A673 (cell line): ENCODE measurements at regions of chr3 and their contacts with region 1.

Region 1: DNA sequence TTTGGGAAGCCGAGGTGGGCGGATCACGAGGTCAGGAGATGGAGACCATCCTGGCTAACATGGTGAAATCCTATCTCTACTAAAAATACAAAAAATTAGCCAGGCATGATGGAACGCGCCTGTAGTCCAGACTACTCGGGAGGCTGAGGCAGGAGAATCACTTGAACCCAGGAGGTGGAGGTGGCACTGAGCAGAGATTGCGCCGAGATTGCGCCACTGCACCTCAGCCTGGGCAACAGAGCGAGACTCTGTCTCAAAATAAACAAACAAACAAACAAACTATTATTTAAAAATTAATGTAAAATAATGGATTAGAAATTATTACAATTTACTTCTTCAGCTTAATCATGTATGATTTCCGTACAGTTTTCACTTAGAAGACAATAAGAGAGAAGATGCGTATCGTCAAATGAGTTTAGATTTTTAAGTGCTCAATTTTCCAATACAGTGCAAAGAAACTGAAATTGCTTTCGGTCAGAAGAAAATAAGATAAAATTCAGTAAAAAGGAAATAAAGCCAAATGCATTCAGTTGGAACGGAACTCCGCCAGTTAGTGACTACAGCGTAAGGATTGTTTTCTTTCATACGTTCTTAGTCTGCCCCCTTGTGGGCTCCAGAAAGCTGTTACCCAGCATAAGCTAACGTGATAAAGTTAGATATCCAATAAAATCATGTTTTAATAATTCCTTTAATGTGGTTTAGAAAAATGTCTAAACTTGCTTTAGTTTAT is 24.8 kb downstream of the AADAC start:
- DNase-seq: peak; percentile 93
- H3K4me3 ChIP-seq: peak overlapping the region; percentile 36
- H3K27ac ChIP-seq: peak overlapping the region; percentile 47
- H3K4me1 ChIP-seq: peaks cover 36% of the 10 kb centered on the region
- H3K27me3 ChIP-seq: no peaks in the 10 kb centered on the region
- CTCF ChIP-seq: peak; percentile 92

Region 2: GRCh38 chr3:151168269-151169094 is 670.3 kb before region 1 on chr3:
- CTCF ChIA-PET with region 1: no interaction called
- POLR2A ChIA-PET with region 1: no interaction called
- intact Hi-C with region 1: loop called (anchors 5 kb)
- DNase-seq: peak; percentile 72
- H3K4me3 ChIP-seq: no peak overlapping the region
- H3K27ac ChIP-seq: no peak overlapping the region
- H3K4me1 ChIP-seq: no peaks in the 10 kb centered on the region
- H3K27me3 ChIP-seq: no peaks in the 10 kb centered on the region
- CTCF ChIP-seq: peak; percentile 90

Region 3: GRCh38 chr3:151290673-151291072 is 548.1 kb before region 1 on chr3:
- CTCF ChIA-PET with region 1: no interaction called
- POLR2A ChIA-PET with region 1: no interaction called
- intact Hi-C with region 1: loop called (anchors 1 kb)
- DNase-seq: peak; percentile 69
- H3K4me3 ChIP-seq: no peak overlapping the region
- H3K27ac ChIP-seq: no peak overlapping the region
- H3K4me1 ChIP-seq: no peaks in the 10 kb centered on the region
- H3K27me3 ChIP-seq: no peaks in the 10 kb centered on the region
- CTCF ChIP-seq: peak; percentile 69

Region 4: DNA sequence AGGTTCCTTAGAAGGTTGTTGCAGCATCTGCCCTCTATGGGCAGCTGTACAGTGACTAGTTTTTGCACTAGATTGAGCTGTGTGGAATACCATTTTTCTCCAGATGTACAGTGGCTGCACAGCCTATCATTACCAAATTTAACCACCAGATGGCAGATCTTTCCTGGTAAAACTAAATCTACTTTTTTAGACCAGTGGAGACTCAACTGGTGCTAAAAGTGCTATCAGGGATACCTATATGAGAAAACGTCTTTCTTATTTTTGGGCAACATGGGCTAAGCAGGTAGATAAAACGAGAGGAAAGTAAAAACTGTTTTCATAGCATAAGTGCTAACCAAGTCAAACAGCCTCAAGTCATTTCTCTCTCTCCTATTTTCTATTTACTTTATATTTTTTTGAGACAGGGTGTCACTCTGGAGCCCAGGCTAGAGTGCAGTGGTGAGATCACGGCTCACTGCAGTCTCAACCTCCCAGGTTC is 399.1 kb before region 1 on chr3:
- CTCF ChIA-PET with region 1: interaction called, 19 read pairs
- POLR2A ChIA-PET with region 1: no interaction called
- intact Hi-C with region 1: loop called (anchors 1 kb)
- DNase-seq: peak; percentile 90
- H3K4me3 ChIP-seq: no peak overlapping the region
- H3K27ac ChIP-seq: peak overlapping the region; percentile 34
- H3K4me1 ChIP-seq: peaks cover 22% of the 10 kb centered on the region
- H3K27me3 ChIP-seq: no peaks in the 10 kb centered on the region
- CTCF ChIP-seq: peak; percentile 77

Region 5: GRCh38 chr3:151560738-151561137 is 278.0 kb before region 1 on chr3:
- CTCF ChIA-PET with region 1: no interaction called
- POLR2A ChIA-PET with region 1: no interaction called
- intact Hi-C with region 1: loop called (anchors 5 kb)
- DNase-seq: no peak
- H3K4me3 ChIP-seq: no peak overlapping the region
- H3K27ac ChIP-seq: peak overlapping the region; percentile 21
- H3K4me1 ChIP-seq: peaks cover 65% of the 10 kb centered on the region
- H3K27me3 ChIP-seq: no peaks in the 10 kb centered on the region
- CTCF ChIP-seq: no peak

Region 6: GRCh38 chr3:151660885-151661284 is 177.9 kb before region 1 on chr3:
- CTCF ChIA-PET with region 1: no interaction called
- POLR2A ChIA-PET with region 1: no interaction called
- intact Hi-C with region 1: loop called (anchors 2 kb)
- DNase-seq: peak; percentile 67
- H3K4me3 ChIP-seq: no peak overlapping the region
- H3K27ac ChIP-seq: peak overlapping the region; percentile 10
- H3K4me1 ChIP-seq: peaks cover 82% of the 10 kb centered on the region
- H3K27me3 ChIP-seq: no peaks in the 10 kb centered on the region
- CTCF ChIP-seq: peak; percentile 50; the same call in 1 of the 2 replicates

Region 7: GRCh38 chr3:151918253-151919029 is 79.7 kb after region 1 on chr3:
- CTCF ChIA-PET with region 1: no interaction called
- POLR2A ChIA-PET with region 1: no interaction called
- intact Hi-C with region 1: loop called (anchors 1 kb)
- DNase-seq: peak; percentile 73
- H3K4me3 ChIP-seq: no peak overlapping the region
- H3K27ac ChIP-seq: no peak overlapping the region
- H3K4me1 ChIP-seq: peaks cover 4% of the 10 kb centered on the region
- H3K27me3 ChIP-seq: no peaks in the 10 kb centered on the region
- CTCF ChIP-seq: peak; percentile 71